Activated B cell treated with CpG ODN at 0.5 μM for 24 hours (primary cell): ENCODE measurements at regions of chr2 and their contacts with region 1.

Region 1: DNA sequence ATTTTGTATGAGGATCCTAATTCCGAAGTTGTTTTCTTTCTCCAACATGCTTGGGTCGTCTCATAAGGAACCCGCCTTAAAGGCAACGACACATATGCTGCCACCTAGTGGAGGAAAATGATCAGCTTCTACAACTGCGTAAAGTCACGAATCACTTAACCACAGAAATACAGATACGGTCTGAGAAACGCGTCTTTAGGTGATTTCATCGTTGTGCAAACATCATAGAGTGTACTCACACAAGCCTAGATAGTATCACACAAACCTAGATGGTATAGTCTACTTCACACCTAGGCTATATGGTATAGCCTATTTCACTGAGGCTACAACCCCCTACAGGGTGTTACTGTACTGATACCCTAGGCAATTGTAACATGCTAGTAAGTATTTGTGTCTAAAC is 13.1 kb downstream of the GNLY start:
- DNase-seq: no peak
- ATAC-seq: peak; percentile 66
- H3K4me3 Mint-ChIP-seq: no peak overlapping the region
- H3K27ac Mint-ChIP-seq: no peak overlapping the region
- H3K4me1 Mint-ChIP-seq: peaks cover 44% of the 10 kb centered on the region
- H3K27me3 Mint-ChIP-seq: peaks cover 4% of the 10 kb centered on the region
- CTCF ChIP-seq: peak; percentile 84

Region 2: GRCh38 chr2:85390941-85391669 is 316.2 kb before region 1 on chr2:
- CTCF ChIA-PET with region 1: no interaction called
- POLR2A ChIA-PET with region 1: no interaction called
- intact Hi-C with region 1: loop called (anchors 1 kb)
- DNase-seq: peak; percentile 69
- ATAC-seq: peak; percentile 22
- H3K4me3 Mint-ChIP-seq: no peak overlapping the region
- H3K27ac Mint-ChIP-seq: peak overlapping the region; percentile 81
- H3K4me1 Mint-ChIP-seq: peaks cover 30% of the 10 kb centered on the region
- H3K27me3 Mint-ChIP-seq: no peaks in the 10 kb centered on the region
- CTCF ChIP-seq: no peak

Region 3: GRCh38 chr2:85635636-85636035 is 71.7 kb before region 1 on chr2:
- CTCF ChIA-PET with region 1: interaction called, 82 read pairs
- POLR2A ChIA-PET with region 1: no interaction called
- intact Hi-C with region 1: loop called (anchors 1 kb)
- DNase-seq: no peak
- ATAC-seq: no peak
- H3K4me3 Mint-ChIP-seq: no peak overlapping the region
- H3K27ac Mint-ChIP-seq: no peak overlapping the region
- H3K4me1 Mint-ChIP-seq: peaks cover 5% of the 10 kb centered on the region
- H3K27me3 Mint-ChIP-seq: no peaks in the 10 kb centered on the region
- CTCF ChIP-seq: no peak

Region 4: DNA sequence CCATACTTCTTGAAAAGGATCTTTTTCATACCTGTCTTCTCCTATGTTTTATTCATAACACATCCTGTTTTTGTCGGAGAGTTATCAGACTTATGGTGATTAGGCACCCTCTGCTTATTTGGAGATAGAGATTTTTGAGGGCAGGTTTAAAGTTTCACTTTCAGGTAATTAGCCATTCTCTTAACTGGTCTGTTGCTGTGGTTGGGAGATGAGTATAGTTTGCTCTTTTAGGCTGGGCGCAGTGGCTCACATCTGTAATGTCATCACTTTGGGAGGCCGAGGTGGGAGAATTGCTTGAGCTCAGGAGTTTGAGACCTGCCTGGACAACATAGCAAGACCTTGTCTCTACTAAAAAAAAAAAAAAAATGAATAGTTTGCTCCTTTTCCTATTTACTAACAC is 64.6 kb before region 1 on chr2:
- CTCF ChIA-PET with region 1: interaction called, 82 read pairs
- POLR2A ChIA-PET with region 1: interaction called, 8 read pairs
- intact Hi-C with region 1: loop called (anchors 1 kb)
- DNase-seq: no peak
- ATAC-seq: no peak
- H3K4me3 Mint-ChIP-seq: no peak overlapping the region
- H3K27ac Mint-ChIP-seq: no peak overlapping the region
- H3K4me1 Mint-ChIP-seq: peaks cover 8% of the 10 kb centered on the region
- H3K27me3 Mint-ChIP-seq: no peaks in the 10 kb centered on the region
- CTCF ChIP-seq: no peak

Region 5: DNA sequence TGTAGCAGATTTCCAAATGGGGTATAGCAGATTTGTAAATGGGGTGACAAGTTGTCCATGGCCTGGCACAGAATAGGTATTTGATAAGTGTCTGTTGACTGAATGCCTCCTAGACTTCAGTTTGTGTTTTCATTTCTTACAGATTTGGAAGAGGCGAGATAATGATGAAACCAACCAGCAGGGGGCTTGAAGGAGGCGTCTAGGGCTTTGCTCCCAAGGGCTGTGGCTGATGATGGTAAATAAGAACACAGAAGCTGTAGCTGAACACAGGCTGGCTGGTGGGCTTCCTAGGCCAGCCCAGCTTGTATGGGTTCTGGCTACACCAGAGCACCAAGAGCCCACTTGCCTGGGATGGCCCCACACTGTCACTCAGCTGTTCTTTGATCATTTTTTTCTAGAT is 58.7 kb before region 1 on chr2:
- CTCF ChIA-PET with region 1: interaction called, 4 read pairs
- POLR2A ChIA-PET with region 1: interaction called, 8 read pairs
- intact Hi-C with region 1: loop called (anchors 1 kb)
- DNase-seq: no peak
- ATAC-seq: peak; percentile 33
- H3K4me3 Mint-ChIP-seq: no peak overlapping the region
- H3K27ac Mint-ChIP-seq: no peak overlapping the region
- H3K4me1 Mint-ChIP-seq: peaks cover 24% of the 10 kb centered on the region
- H3K27me3 Mint-ChIP-seq: no peaks in the 10 kb centered on the region
- CTCF ChIP-seq: no peak

Region 6: DNA sequence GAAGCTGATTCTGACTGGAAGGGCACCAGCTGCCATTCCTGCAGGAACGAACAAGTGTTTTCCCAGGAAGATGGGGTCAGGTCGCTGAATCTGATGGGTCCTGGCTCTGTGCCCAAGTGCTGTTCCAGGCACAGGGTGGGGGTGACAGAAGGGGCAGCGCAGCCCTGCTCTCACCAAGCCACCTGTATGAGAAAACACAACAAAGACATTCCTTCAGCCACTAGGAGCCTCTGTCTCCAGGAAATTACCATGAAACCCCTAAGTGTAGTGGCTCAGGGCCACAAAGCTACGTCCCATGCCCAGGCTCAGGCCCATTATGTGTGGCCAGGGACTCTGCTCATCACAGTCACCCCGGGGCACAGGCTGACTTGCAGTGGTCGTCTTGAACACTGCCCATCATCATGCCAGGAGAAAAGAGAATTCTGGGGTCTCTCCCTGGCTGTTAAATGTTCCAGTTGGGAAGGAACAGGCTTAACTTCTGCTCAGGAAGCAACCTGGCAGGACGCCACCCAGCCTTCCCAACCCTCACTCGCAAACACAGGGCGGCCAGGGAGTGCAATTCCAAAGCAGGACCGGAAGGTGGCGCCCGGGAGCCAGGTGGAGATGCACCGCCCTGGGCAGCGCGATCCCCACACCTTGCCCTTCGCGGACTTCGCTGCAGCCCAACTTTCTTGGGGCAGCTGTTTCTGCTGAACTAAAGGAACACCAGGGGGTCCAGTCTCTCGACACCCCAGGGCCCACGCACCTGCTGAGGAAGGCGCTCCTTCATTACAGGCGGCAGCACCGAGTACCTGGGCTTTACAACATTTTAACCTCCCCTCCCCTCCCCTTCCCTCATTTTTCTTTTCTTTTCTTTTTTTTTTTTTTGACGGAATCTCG is 28.3 kb before region 1 on chr2:
- CTCF ChIA-PET with region 1: interaction called, 39 read pairs
- POLR2A ChIA-PET with region 1: no interaction called
- intact Hi-C with region 1: loop called (anchors 1 kb)
- DNase-seq: peak; percentile 73
- ATAC-seq: peak; percentile 99
- H3K4me3 Mint-ChIP-seq: no peak overlapping the region
- H3K27ac Mint-ChIP-seq: no peak overlapping the region
- H3K4me1 Mint-ChIP-seq: no peaks in the 10 kb centered on the region
- H3K27me3 Mint-ChIP-seq: peaks cover 9% of the 10 kb centered on the region
- CTCF ChIP-seq: peak; percentile 41

Region 7: GRCh38 chr2:85753525-85754312 is 46.4 kb after region 1 on chr2 and contains the start of gene ATOH8:
- CTCF ChIA-PET with region 1: no interaction called
- POLR2A ChIA-PET with region 1: no interaction called
- intact Hi-C with region 1: no loop called
- DNase-seq: peak; percentile 39
- ATAC-seq: peak; percentile 33
- H3K4me3 Mint-ChIP-seq: peak within 1 kb of the TSS; percentile 85
- H3K27ac Mint-ChIP-seq: no peak within 1 kb of the TSS
- H3K4me1 Mint-ChIP-seq: peaks cover 41% of the 10 kb centered on the region
- H3K27me3 Mint-ChIP-seq: peaks cover 37% of the 10 kb centered on the region
- CTCF ChIP-seq: no peak
- total RNA-seq, gene ATOH8: not detected in 2 replicates